Calu3 (cell line): ENCODE measurements at regions of chr12 and their contacts with region 1.

Region 1: DNA sequence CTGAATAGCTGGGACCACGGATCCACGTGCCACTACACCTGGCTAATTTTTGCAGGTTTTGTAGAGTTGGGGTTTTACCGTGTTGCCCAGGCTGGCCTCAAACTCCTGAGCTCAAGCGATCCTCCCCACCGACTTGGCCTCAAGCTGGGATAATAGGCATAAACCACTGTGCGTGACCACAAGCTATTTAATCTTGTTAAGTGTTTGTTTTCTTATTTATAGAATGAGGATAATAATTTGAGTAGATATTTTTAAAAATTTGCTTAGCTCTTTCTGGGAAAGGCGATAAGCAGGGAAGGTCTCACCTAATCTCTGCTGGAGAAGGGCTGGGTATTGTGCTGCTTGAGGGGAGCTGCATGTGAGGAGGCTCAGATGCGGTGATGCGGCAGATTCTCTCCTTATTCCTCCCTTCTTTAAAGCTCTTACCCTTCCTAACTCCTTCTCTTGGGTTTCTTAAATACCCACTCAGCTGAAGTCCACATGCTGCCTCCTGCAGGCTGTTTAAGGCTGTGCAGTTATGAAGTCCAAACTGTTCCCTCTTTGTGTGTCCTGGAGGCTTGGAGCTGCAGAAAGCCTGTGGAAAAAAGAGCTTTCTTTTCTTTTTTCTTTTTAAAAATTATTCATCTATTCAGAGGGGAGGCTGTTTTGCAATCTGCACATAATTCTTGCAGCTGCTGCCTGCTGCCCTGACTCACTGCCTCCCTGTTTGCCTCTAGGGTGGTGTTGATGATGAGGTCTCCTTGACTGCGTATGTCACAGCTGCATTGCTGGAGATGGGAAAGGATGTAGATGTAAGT is 37.9 kb downstream of the A2ML1 start:
- DNase-seq: peak; percentile 38
- H3K4me3 Mint-ChIP-seq: no peak overlapping the region
- H3K27ac Mint-ChIP-seq: no peak overlapping the region
- H3K4me1 Mint-ChIP-seq: no peaks in the 10 kb centered on the region
- H3K27me3 Mint-ChIP-seq: no peaks in the 10 kb centered on the region
- CTCF ChIP-seq: no peak

Region 2: DNA sequence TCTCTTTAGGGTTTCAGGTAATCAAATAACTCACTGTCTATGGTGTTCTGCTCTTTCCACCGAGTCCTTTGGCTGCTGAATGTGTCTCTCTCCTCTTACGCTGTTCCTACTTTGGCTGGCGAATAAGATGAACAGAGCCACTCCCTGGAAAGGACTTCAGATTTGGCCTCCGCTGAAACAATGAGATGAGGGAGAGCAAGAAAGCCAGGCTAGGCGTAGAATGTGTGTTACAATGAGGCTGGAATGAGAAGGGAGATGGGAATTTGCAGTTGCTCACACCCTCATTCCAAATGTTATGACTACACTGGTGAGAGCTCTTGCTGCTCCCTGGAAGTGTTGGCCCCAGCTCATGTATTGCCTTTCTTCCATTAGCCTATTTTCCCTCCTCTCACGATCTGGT is 197.8 kb before region 1 on chr12 and contains the start of gene MFAP5:
- CTCF ChIA-PET with region 1: interaction called, 15 read pairs
- intact Hi-C with region 1: no loop called
- DNase-seq: no peak
- H3K4me3 Mint-ChIP-seq: no peak within 1 kb of the TSS
- H3K27ac Mint-ChIP-seq: no peak within 1 kb of the TSS
- H3K4me1 Mint-ChIP-seq: no peaks in the 10 kb centered on the region
- H3K27me3 Mint-ChIP-seq: peaks cover 13% of the 10 kb centered on the region
- CTCF ChIP-seq: no peak
- total RNA-seq, gene MFAP5: not detected in 2 replicates

Region 3: DNA sequence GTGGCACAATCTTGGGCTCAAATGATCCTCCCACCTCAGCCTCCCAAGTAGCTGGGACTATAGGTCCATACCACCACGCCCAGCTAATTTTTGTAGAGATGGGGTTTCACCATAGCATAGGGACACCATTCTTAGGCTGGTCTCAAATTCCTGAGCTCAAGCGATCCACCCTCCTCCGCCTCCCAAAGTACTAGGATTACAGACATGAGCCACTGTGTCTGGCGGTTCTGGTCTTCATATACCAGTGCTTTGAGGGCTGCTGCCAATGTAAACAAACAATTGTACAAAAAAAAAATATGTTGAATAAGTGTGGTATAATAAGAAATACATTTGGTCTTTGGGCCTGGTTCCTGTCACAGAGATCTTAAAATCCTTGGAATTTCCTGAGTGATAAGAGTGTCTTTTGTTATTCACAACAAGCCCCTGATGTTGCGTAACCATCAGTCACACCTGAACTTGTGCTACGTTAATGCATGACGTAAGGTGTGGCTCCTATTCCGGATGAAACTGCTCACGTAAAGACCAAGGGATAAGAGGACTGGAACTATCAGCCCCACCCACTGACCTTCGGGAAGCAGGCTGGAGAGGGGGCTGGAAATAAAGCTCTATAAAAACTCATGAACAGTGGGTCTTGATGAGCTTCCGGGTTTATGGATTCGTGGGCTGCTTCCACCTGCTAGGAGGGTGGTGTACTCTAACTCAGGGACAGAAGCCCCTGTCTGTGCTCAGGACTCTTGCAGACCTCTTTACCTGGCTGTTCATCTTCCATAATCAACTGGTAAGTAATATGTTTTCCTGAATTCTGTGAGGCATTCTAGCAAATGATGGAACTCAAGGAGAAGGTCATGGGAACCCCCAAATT is 179.1 kb before region 1 on chr12:
- CTCF ChIA-PET with region 1: interaction called, 17 read pairs
- intact Hi-C with region 1: loop called (anchors 1 kb)
- DNase-seq: peak; percentile 58
- H3K4me3 Mint-ChIP-seq: peak overlapping the region; percentile 71
- H3K27ac Mint-ChIP-seq: peak overlapping the region; percentile 78
- H3K4me1 Mint-ChIP-seq: peaks cover 11% of the 10 kb centered on the region
- H3K27me3 Mint-ChIP-seq: no peaks in the 10 kb centered on the region
- CTCF ChIP-seq: no peak